Activated CD4-positive, alpha-beta memory T cell treated with anti-CD3 and anti-CD28 coated beads for 36 hours (primary cell): ENCODE measurements at regions of chr7 and their contacts with region 1.

Region 1: GRCh38 chr7:95950698-95951097 is 178.3 kb downstream of the DYNC1I1 start:
- DNase-seq: no peak
- H3K4me3 Mint-ChIP-seq: no peak overlapping the region
- H3K27ac Mint-ChIP-seq: no peak overlapping the region
- H3K4me1 Mint-ChIP-seq: no peaks in the 10 kb centered on the region
- H3K27me3 Mint-ChIP-seq: peaks cover 4% of the 10 kb centered on the region

Region 2: GRCh38 chr7:95972523-95972922 is 21.8 kb after region 1 on chr7:
- CTCF ChIA-PET with region 1: no interaction called
- POLR2A ChIA-PET with region 1: no interaction called
- intact Hi-C with region 1: loop called (anchors 1 kb)
- DNase-seq: no peak
- H3K4me3 Mint-ChIP-seq: no peak overlapping the region
- H3K27ac Mint-ChIP-seq: no peak overlapping the region
- H3K4me1 Mint-ChIP-seq: no peaks in the 10 kb centered on the region
- H3K27me3 Mint-ChIP-seq: no peaks in the 10 kb centered on the region